Activated CD4-positive, alpha-beta memory T cell treated with anti-CD3 and anti-CD28 coated beads for 36 hours (primary cell): ENCODE measurements at regions of chr3 and their contacts with region 1.

Region 1: GRCh38 chr3:41198950-41199865 is at the start of gene CTNNB1:
- DNase-seq: peak; percentile 92
- H3K4me3 Mint-ChIP-seq: peak within 1 kb of the TSS; percentile 84
- H3K27ac Mint-ChIP-seq: peak within 1 kb of the TSS; percentile 93
- H3K4me1 Mint-ChIP-seq: peaks cover 28% of the 10 kb centered on the region
- H3K27me3 Mint-ChIP-seq: peaks cover 4% of the 10 kb centered on the region
- total RNA-seq, gene CTNNB1: 131 to 132 TPM

Region 2: DNA sequence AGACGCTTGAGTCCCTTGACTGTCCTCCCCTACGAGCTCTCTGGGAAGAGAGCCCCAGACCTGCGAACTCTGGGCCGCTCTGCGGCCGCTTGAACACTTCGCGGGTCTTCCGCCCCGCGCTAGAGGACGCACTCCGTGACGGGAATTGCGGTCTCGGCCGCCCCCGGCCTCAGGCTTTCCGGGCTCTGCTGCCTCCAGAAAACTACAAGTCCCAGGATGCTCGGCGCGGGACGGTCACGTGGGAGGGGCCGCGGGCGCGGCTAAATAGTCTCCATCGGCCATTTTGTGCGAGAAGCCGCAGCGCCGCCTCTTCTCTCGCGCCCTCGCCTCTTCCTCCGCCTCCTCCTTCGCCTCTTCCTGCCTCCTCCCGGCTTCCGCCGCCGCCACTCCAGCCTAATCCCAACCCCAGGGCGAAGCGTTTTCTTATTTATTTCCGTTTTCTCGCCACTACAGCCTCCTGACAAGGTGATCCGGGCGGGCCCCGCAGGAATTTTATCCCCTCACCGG is 889.7 kb before region 1 on chr3 and contains the start of gene EIF1B:
- CTCF ChIA-PET with region 1: no interaction called
- POLR2A ChIA-PET with region 1: no interaction called
- intact Hi-C with region 1: loop called (anchors 5 kb)
- DNase-seq: peak; percentile 99
- H3K4me3 Mint-ChIP-seq: peak within 1 kb of the TSS; percentile 96
- H3K27ac Mint-ChIP-seq: peak within 1 kb of the TSS; percentile 97
- H3K4me1 Mint-ChIP-seq: peaks cover 23% of the 10 kb centered on the region
- H3K27me3 Mint-ChIP-seq: no peaks in the 10 kb centered on the region
- total RNA-seq, gene EIF1B: 48.6 to 51.0 TPM

Region 3: GRCh38 chr3:40524568-40525285 is 674.5 kb before region 1 on chr3 and contains the start of gene ZNF621:
- CTCF ChIA-PET with region 1: no interaction called
- POLR2A ChIA-PET with region 1: no interaction called
- intact Hi-C with region 1: loop called (anchors 5 kb)
- DNase-seq: peak; percentile 88
- H3K4me3 Mint-ChIP-seq: peak within 1 kb of the TSS; percentile 91
- H3K27ac Mint-ChIP-seq: peak within 1 kb of the TSS; percentile 84
- H3K4me1 Mint-ChIP-seq: peaks cover 23% of the 10 kb centered on the region
- H3K27me3 Mint-ChIP-seq: no peaks in the 10 kb centered on the region
- total RNA-seq, gene ZNF621: 19.7 to 22.3 TPM

Region 4: DNA sequence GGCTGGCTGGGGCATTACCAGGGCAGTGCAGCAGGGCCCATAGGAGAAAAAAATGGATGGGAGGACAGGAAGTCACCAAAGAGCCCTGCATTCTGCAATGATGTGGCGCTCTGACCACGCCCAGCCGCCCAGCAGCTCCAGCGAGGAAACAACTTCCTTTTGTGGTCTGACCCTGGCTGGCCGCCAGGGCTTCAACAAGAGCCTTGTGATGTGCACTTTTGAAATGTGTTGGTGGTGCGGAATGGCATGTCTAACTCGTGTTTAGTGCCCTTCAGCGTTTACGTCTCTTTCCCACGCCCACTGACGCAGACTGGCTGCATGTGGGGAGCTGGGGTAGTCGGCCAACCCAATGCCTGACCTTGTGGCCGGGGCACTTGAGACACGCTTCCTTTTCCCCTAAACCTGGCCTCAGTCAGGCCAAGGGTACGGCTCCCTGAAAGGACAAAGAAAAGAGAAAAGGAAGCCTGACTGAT is 81.8 kb before region 1 on chr3:
- CTCF ChIA-PET with region 1: no interaction called
- POLR2A ChIA-PET with region 1: interaction called, 5 read pairs
- intact Hi-C with region 1: loop called (anchors 1 kb)
- DNase-seq: peak; percentile 94
- H3K4me3 Mint-ChIP-seq: peak overlapping the region; percentile 16
- H3K27ac Mint-ChIP-seq: peak overlapping the region; percentile 78
- H3K4me1 Mint-ChIP-seq: peaks cover 24% of the 10 kb centered on the region
- H3K27me3 Mint-ChIP-seq: no peaks in the 10 kb centered on the region

Region 5: GRCh38 chr3:41224120-41224806 is 25.1 kb after region 1 on chr3:
- CTCF ChIA-PET with region 1: no interaction called
- POLR2A ChIA-PET with region 1: interaction called, 10 read pairs
- intact Hi-C with region 1: no loop called
- DNase-seq: no peak
- H3K4me3 Mint-ChIP-seq: no peak overlapping the region
- H3K27ac Mint-ChIP-seq: no peak overlapping the region
- H3K4me1 Mint-ChIP-seq: peaks cover 58% of the 10 kb centered on the region
- H3K27me3 Mint-ChIP-seq: no peaks in the 10 kb centered on the region

Region 6: GRCh38 chr3:42012935-42013690 is 813.9 kb after region 1 on chr3:
- CTCF ChIA-PET with region 1: no interaction called
- POLR2A ChIA-PET with region 1: no interaction called
- intact Hi-C with region 1: loop called (anchors 5 kb)
- DNase-seq: peak; percentile 86
- H3K4me3 Mint-ChIP-seq: peak overlapping the region; percentile 82
- H3K27ac Mint-ChIP-seq: peak overlapping the region; percentile 90
- H3K4me1 Mint-ChIP-seq: peaks cover 43% of the 10 kb centered on the region
- H3K27me3 Mint-ChIP-seq: no peaks in the 10 kb centered on the region